Activated T-helper 2 cell treated with anti-CD3 and anti-CD28 coated beads, Interferon-gamma antibody, Interleukin-2, Interleukin-4, amounts not matched to agents 10 μg/mL and 5 μg/mL and 100 μg/mL, durations not matched to agents 14 hours and 24 hours and 36 hours (primary cell): ENCODE measurements at regions of chr20 and their contacts with region 1.

Region 1: DNA sequence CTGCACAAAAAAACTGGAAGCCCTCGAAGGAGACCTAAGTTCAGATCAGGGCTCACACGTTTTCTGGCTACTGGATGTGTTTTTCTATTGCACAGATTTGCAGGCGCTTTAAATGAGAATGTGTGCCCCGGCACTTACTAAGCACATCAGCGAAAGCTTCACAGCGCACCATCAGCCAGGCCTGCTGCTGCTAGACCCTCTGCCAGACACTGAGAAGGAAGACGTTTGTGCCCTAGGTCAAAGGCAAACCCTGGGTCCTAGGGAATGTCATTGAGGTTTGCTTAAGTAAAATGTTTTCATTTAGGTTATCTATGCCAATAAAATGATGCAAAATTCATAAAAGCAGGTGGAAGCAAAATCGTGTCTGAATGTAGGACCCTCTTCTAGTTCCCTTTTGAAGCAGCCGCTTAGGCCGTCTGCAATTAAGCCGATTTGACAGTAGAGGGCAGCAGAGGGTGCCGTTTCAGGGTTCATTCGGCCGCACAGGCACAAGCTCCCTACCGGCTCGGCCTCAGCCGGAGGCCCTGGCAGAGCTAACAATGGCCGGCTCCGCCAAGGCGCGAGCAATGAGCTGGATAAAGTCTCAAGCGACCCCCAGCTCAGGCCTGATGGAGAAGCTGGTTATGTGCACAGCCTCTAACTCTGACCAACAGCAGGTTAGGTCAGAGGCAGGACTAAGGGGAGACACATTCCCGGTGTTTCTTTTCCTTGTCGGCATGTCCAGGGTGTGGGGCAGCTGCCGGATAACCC is 107.2 kb upstream of the FOXA2 start:
- DNase-seq: peak; percentile 22
- H3K4me3 Mint-ChIP-seq: no peak overlapping the region
- H3K27ac Mint-ChIP-seq: no peak overlapping the region
- H3K4me1 Mint-ChIP-seq: no peaks in the 10 kb centered on the region
- H3K27me3 Mint-ChIP-seq: no peaks in the 10 kb centered on the region

Region 2: DNA sequence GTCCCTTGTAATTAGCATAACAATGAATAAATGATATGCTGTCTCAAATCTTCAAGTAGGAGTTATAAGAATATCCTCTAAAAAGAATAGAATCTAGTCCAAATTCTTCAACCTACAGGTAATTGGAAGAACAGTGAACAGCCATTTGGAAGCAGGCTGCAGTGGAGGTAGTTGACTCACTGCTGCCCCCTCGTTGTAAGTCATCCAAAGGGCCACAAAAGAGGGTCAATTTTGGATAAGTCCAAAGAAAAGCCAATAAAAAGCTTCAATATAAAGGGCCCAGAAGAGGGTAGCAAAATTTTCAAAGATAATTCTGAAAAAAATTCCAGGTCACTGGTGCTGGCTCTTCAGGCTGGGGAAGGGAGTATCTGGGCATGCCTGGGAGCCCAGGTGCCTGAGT is 282.8 kb after region 1 on chr20:
- intact Hi-C with region 1: loop called (anchors 2 kb)
- DNase-seq: no peak
- H3K4me3 Mint-ChIP-seq: no peak overlapping the region
- H3K27ac Mint-ChIP-seq: no peak overlapping the region
- H3K4me1 Mint-ChIP-seq: no peaks in the 10 kb centered on the region
- H3K27me3 Mint-ChIP-seq: peaks cover 5% of the 10 kb centered on the region

Region 3: DNA sequence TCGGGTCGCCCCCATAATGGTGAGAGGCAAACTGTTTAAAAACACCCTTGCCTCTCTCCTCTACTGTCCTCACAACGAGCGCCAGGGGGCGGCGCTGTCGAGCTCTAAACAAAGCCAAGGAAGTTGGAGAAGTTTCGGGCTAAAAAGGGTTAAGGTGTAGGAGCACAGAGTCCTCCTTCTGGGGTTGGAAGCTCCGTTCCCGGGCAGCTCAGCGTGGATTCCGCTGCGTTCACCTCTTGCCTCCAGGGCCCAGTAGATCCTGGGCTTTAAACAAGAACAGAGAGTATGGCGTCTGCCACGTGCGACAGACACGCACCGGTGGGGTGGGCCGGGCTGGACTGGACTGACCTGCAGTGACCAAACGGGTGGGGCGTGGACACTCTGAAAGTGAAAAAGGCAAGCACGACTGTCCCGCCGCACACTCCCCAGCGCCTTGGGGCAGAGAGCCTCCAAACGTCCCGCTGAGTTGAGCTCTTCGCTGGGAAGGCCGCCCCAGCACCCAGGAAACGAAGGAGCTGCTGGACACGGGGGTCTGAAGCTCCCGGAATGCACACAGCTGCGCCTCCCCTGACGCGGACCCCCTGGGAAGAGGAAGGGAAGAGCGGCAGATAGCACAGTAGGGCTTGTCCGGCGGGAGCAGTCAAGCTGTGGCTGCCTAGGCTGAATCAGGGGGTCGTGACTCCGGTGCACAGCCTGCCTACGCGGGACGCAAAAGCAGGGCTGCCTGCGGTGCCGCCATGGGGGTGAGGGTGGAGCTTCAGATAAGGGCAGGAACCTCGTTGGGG is 359.5 kb after region 1 on chr20:
- intact Hi-C with region 1: loop called (anchors 10 kb)
- DNase-seq: peak; percentile 26
- H3K4me3 Mint-ChIP-seq: no peak overlapping the region
- H3K27ac Mint-ChIP-seq: no peak overlapping the region
- H3K4me1 Mint-ChIP-seq: no peaks in the 10 kb centered on the region
- H3K27me3 Mint-ChIP-seq: peaks cover 56% of the 10 kb centered on the region

Region 4: GRCh38 chr20:23235173-23236027 is 543.9 kb after region 1 on chr20:
- intact Hi-C with region 1: loop called (anchors 5 kb)
- DNase-seq: peak; percentile 22
- H3K4me3 Mint-ChIP-seq: no peak overlapping the region
- H3K27ac Mint-ChIP-seq: no peak overlapping the region
- H3K4me1 Mint-ChIP-seq: no peaks in the 10 kb centered on the region
- H3K27me3 Mint-ChIP-seq: peaks cover 4% of the 10 kb centered on the region

Region 5: DNA sequence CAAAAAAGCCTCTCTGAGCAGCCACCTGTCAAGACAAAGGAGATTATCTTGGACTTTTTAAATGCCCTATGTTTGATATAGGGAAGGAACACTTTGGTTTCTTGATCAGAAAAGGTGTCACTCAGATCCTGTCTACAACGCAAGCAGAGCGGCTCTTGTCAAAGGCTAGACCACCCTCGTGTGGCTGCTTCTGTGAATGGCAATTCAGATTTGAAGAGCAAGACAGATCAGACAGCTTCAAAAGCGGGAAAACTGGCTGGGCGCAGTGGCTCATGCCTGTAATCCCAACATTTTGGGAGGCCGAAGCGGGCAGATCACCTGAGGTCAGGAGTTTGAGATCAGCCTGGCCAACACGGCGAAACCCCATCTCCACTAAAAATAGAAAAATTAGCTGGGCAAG is 649.0 kb after region 1 on chr20:
- intact Hi-C with region 1: loop called (anchors 5 kb)
- DNase-seq: no peak
- H3K4me3 Mint-ChIP-seq: no peak overlapping the region
- H3K27ac Mint-ChIP-seq: no peak overlapping the region
- H3K4me1 Mint-ChIP-seq: peaks cover 7% of the 10 kb centered on the region
- H3K27me3 Mint-ChIP-seq: peaks cover 2% of the 10 kb centered on the region

Region 6: GRCh38 chr20:23441850-23442313 is 750.3 kb after region 1 on chr20:
- intact Hi-C with region 1: loop called (anchors 10 kb)
- DNase-seq: peak; percentile 34
- H3K4me3 Mint-ChIP-seq: no peak overlapping the region
- H3K27ac Mint-ChIP-seq: no peak overlapping the region
- H3K4me1 Mint-ChIP-seq: no peaks in the 10 kb centered on the region
- H3K27me3 Mint-ChIP-seq: no peaks in the 10 kb centered on the region